ENCODE measurements at regions of chr16 and their contacts with region 1.

Region 1: GRCh38 chr16:50281964-50282538 is 15.7 kb downstream of the ADCY7 start:
- DNase-seq: peak; percentile 76 to 82
- ATAC-seq: peak; percentile 70 to 93 (median 93)
- H3K4me3 ChIP-seq: peak overlapping the region; percentile 26
- H3K4me3 Mint-ChIP-seq: peak overlapping the region; percentile 91
- H3K27ac ChIP-seq: peak overlapping the region; percentile 85
- H3K27ac Mint-ChIP-seq: peak overlapping the region; percentile 91 to 99
- H3K4me1 ChIP-seq: peaks cover 88% of the 10 kb centered on the region
- H3K4me1 Mint-ChIP-seq: peaks cover 82 to 96% of the 10 kb centered on the region in 2 donors
- H3K27me3 ChIP-seq: no peaks in the 10 kb centered on the region
- H3K27me3 Mint-ChIP-seq: no peaks in the 10 kb centered on the region
- CTCF ChIP-seq: no peak

Region 2: GRCh38 chr16:50228364-50228868 is 53.6 kb before region 1 on chr16:
- intact Hi-C with region 1: loop called (anchors 5 kb)
- DNase-seq: no peak
- ATAC-seq: peak in 2 of 3 donors; percentile 66 to 70
- H3K4me3 ChIP-seq: no peak overlapping the region
- H3K4me3 Mint-ChIP-seq: no peak overlapping the region
- H3K27ac ChIP-seq: peak overlapping the region; percentile 29
- H3K27ac Mint-ChIP-seq: peak overlapping the region; percentile 20 to 74
- H3K4me1 ChIP-seq: peaks cover 18% of the 10 kb centered on the region
- H3K4me1 Mint-ChIP-seq: peaks cover 24 to 25% of the 10 kb centered on the region in 2 donors
- H3K27me3 ChIP-seq: no peaks in the 10 kb centered on the region
- H3K27me3 Mint-ChIP-seq: no peaks in the 10 kb centered on the region
- CTCF ChIP-seq: no peak

Region 3: GRCh38 chr16:50245417-50246298 is 36.4 kb before region 1 on chr16:
- intact Hi-C with region 1: loop called (anchors 5 kb)
- DNase-seq: peak; percentile 56 to 66
- ATAC-seq: peak; percentile 75 to 89 (median 81)
- H3K4me3 ChIP-seq: peak overlapping the region; percentile 79
- H3K4me3 Mint-ChIP-seq: peak overlapping the region; percentile 82
- H3K27ac ChIP-seq: peak overlapping the region; percentile 18
- H3K27ac Mint-ChIP-seq: peak overlapping the region; percentile 34 to 81
- H3K4me1 ChIP-seq: peaks cover 25% of the 10 kb centered on the region
- H3K4me1 Mint-ChIP-seq: peaks cover 18 to 46% of the 10 kb centered on the region in 2 donors
- H3K27me3 ChIP-seq: no peaks in the 10 kb centered on the region
- H3K27me3 Mint-ChIP-seq: no peaks in the 10 kb centered on the region
- CTCF ChIP-seq: peak; percentile 45

Region 4: DNA sequence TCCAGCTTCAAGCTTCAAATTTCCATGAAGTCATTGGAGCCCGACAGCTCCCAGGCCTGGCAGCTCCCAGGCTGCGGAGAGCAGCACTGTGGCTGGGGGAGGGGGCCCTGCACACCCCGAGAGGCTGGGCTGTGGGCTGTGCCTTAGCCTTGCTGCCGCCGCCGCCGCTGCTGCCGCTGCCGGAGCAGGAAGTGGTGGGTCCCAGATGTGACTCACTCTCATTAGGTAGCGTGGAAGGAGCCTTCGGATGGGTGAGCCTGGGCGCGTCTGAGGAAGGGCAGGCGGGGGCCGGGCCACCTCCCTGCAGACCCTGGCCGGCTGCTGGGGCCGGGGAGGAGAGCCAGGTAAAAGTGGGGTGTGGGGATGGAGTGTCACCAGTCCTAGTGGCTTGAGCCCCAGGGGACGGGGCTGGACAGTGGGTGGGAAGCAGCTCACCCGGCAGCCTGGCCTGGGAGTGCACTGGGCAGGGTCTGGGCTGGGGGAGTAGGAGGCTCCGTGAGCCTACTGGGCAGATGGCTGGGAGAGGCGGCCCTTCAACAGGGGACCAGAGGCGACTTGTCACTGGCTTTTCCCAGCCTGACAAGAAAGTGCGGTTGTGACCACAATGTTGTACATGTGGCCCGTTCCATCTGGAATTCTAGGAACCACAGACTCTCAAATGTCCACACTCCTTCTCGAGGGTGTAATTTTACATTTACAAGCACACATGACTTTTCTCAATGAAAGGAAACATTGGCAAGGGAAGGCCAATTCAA is 15.5 kb before region 1 on chr16 and contains the start of gene ADCY7:
- intact Hi-C with region 1: loop called (anchors 1 kb)
- DNase-seq: peak; percentile 82 to 87
- ATAC-seq: peak; percentile 79 to 86 (median 85)
- H3K4me3 ChIP-seq: peak within 1 kb of the TSS; percentile 75
- H3K4me3 Mint-ChIP-seq: peak within 1 kb of the TSS; percentile 88
- H3K27ac ChIP-seq: peak within 1 kb of the TSS; percentile 72
- H3K27ac Mint-ChIP-seq: peak within 1 kb of the TSS; percentile 91 to 99
- H3K4me1 ChIP-seq: peaks cover 87% of the 10 kb centered on the region
- H3K4me1 Mint-ChIP-seq: peaks cover 86 to 95% of the 10 kb centered on the region in 2 donors
- H3K27me3 ChIP-seq: no peaks in the 10 kb centered on the region
- H3K27me3 Mint-ChIP-seq: no peaks in the 10 kb centered on the region
- CTCF ChIP-seq: no peak
- total RNA-seq, gene ADCY7: 479 to 591 (median 512) TPM

Region 5: DNA sequence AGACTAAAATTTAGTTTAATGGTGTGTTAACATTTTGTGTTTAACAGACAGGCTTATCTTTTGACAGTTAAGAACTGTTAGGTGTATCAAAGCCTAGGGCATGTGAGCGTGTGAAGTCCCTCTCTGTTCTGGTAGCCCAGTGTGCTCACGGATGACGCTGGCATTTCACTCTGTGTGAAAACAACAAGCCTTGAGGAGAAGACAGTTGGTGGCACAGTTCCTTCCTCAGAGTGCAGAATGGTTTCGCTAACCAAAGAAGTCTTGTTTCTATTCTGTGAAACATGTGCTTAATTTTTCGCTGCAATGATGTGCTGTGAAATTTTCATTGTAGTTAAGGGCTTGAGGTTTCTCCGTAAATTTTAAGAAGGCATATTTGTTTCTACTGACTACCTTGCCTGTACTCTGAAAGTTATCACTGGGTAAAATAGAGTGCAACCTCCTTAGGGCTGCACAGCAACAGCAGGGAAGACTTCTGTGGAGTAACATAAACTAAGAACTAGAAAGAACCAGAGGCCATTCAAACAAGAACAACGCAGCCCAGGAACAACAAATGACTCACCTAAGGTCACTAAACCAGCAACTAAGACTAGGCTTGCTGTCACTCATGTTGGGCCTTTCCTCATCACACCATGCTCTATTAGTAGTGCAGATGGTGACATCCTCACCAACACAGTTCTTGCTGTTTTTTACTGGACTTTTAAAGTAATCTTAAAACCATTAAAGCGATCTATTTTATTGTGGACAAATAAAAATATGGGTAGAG is 53.3 kb after region 1 on chr16:
- intact Hi-C with region 1: loop called (anchors 2 kb)
- DNase-seq: peak; percentile 58 to 64
- ATAC-seq: peak; percentile 80 to 94 (median 92)
- H3K4me3 ChIP-seq: no peak overlapping the region
- H3K4me3 Mint-ChIP-seq: peak overlapping the region; percentile 74
- H3K27ac ChIP-seq: peak overlapping the region; percentile 99
- H3K27ac Mint-ChIP-seq: peak overlapping the region; percentile 90 to 98
- H3K4me1 ChIP-seq: peaks cover 10% of the 10 kb centered on the region
- H3K4me1 Mint-ChIP-seq: peaks cover 42 to 45% of the 10 kb centered on the region in 2 donors
- H3K27me3 ChIP-seq: no peaks in the 10 kb centered on the region
- H3K27me3 Mint-ChIP-seq: no peaks in the 10 kb centered on the region
- CTCF ChIP-seq: no peak

Measured in natural killer cell (primary cell).